Gastrocnemius medialis (tissue), 4 donors: ENCODE measurements at regions of chr9 and their contacts with region 1.

Region 1: GRCh38 chr9:91193658-91194391 is 167.9 kb downstream of the AUH start:
- DNase-seq: peak; percentile 83 to 91
- ATAC-seq: peak; percentile 54 to 55
- H3K4me3 ChIP-seq: peak overlapping the region; percentile 58 to 67 (median 62)
- H3K27ac ChIP-seq: peak overlapping the region; percentile 97 to 100 (median 99)
- H3K4me1 ChIP-seq: peaks cover 51 to 67% of the 10 kb centered on the region in 2 donors
- H3K27me3 ChIP-seq: no peaks in the 10 kb centered on the region
- CTCF ChIP-seq: no peak
- POLR2A ChIP-seq: peak; percentile 89 to 91

Region 2: GRCh38 chr9:89318123-89319014 is 1875.5 kb before region 1 on chr9 and contains the start of gene SECISBP2:
- in situ Hi-C with region 1: no loop called
- intact Hi-C with region 1: loop called (anchors 10 kb)
- DNase-seq: peak; percentile 92 to 95
- ATAC-seq: peak; percentile 90 to 93
- H3K4me3 ChIP-seq: peak within 1 kb of the TSS; percentile 69 to 83 (median 80)
- H3K27ac ChIP-seq: peak within 1 kb of the TSS; percentile 87 to 99 (median 98)
- H3K4me1 ChIP-seq: peaks cover 39 to 40% of the 10 kb centered on the region in 2 donors
- H3K27me3 ChIP-seq: no peaks in the 10 kb centered on the region
- CTCF ChIP-seq: peak; percentile 62 to 73 (median 66)
- POLR2A ChIP-seq: peak; percentile 96 to 97
- total RNA-seq, gene SECISBP2: 40.2 to 70.8 (median 54.9) TPM

Region 3: GRCh38 chr9:89602978-89603766 is 1590.7 kb before region 1 on chr9:
- in situ Hi-C with region 1: no loop called
- intact Hi-C with region 1: loop called (anchors 10 kb)
- DNase-seq: peak; percentile 82 to 89
- ATAC-seq: peak; percentile 35 to 45
- H3K4me3 ChIP-seq: peak overlapping the region; percentile 73 to 84 (median 78)
- H3K27ac ChIP-seq: peak overlapping the region; percentile 92 to 94 (median 94)
- H3K4me1 ChIP-seq: peaks cover 11 to 19% of the 10 kb centered on the region in 2 donors
- H3K27me3 ChIP-seq: no peaks in the 10 kb centered on the region
- CTCF ChIP-seq: peak; percentile 86 to 92 (median 89)
- POLR2A ChIP-seq: no peak

Region 4: GRCh38 chr9:90914868-90915483 is 278.8 kb before region 1 on chr9:
- in situ Hi-C with region 1: loop called in 2 of 4 experiments (anchors 10 kb)
- intact Hi-C with region 1: no loop called
- DNase-seq: peak; percentile 64 to 70
- ATAC-seq: peak; percentile 63 to 72
- H3K4me3 ChIP-seq: no peak overlapping the region
- H3K27ac ChIP-seq: peak overlapping the region in 1 of 4 donors; percentile 19
- H3K4me1 ChIP-seq: peaks cover 7 to 8% of the 10 kb centered on the region in 2 donors
- H3K27me3 ChIP-seq: no peaks in the 10 kb centered on the region
- CTCF ChIP-seq: peak; percentile 86 to 96 (median 93)
- POLR2A ChIP-seq: no peak

Region 5: DNA sequence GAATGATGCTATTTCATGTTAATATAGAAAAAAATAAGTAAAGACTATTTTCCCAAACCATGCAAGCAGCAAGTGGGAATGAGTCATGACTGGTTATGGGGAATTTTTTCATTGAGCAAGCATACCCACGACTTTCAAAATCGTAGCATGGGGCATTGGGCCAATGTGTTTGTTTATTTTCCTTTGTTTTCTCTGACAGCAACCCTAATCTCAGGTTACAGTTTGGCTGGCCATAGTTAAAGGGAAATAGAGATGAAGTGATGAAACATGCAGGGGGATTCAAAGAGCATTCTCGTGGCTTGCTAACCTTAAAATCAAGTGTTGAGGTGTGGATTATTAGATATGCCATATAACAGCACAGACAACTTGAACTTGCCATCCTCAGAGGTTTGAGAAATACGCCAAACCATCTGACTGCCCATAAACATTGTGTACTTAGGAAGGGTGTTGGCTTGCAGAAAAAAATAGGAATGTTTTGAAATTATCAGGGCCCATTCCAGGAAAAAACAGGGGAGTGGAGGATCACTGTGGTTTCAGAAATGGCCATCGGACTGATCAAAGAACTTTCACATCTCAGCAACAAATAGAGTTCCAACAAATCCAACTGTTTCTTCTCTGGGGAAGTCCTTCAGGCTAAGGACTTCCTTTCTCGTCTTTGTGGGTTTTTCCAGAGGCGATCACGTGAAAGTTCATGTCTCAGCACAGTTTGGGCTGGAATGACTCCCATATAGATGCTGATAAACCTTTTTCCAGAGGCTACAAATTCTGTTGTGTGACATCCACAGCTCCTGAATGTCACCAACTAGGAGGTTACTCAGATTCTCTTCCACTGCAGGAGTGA is 133.1 kb before region 1 on chr9:
- in situ Hi-C with region 1: loop called in 3 of 4 experiments (anchors 5 to 25 kb)
- intact Hi-C with region 1: loop called (anchors 1 kb)
- DNase-seq: peak; percentile 70 to 81
- ATAC-seq: peak; percentile 71 to 73
- H3K4me3 ChIP-seq: no peak overlapping the region
- H3K27ac ChIP-seq: peak overlapping the region; percentile 82 to 87 (median 84)
- H3K4me1 ChIP-seq: peaks cover 42 to 43% of the 10 kb centered on the region in 2 donors
- H3K27me3 ChIP-seq: no peaks in the 10 kb centered on the region
- CTCF ChIP-seq: no peak
- POLR2A ChIP-seq: peak in 1 of 2 donors; percentile 12

Region 6: GRCh38 chr9:91117959-91118703 is 75.7 kb before region 1 on chr9:
- in situ Hi-C with region 1: no loop called
- intact Hi-C with region 1: loop called (anchors 2 kb)
- DNase-seq: peak; percentile 84 to 90
- ATAC-seq: peak; percentile 86 to 89
- H3K4me3 ChIP-seq: peak overlapping the region; percentile 41 to 50 (median 42)
- H3K27ac ChIP-seq: peak overlapping the region; percentile 80 to 90 (median 82)
- H3K4me1 ChIP-seq: peaks cover 25 to 32% of the 10 kb centered on the region in 2 donors
- H3K27me3 ChIP-seq: no peaks in the 10 kb centered on the region
- CTCF ChIP-seq: no peak
- POLR2A ChIP-seq: peak; percentile 55 to 70

Region 7: GRCh38 chr9:91211919-91212318 is 18.1 kb after region 1 on chr9:
- in situ Hi-C with region 1: no loop called
- intact Hi-C with region 1: no loop called
- DNase-seq: no peak
- ATAC-seq: no peak
- H3K4me3 ChIP-seq: no peak overlapping the region
- H3K27ac ChIP-seq: no peak overlapping the region
- H3K4me1 ChIP-seq: peaks cover 27 to 30% of the 10 kb centered on the region in 2 donors
- H3K27me3 ChIP-seq: no peaks in the 10 kb centered on the region
- CTCF ChIP-seq: no peak
- POLR2A ChIP-seq: no peak

Region 8: GRCh38 chr9:91361291-91362050 is 167.6 kb after region 1 on chr9 and contains the start of gene AUH:
- in situ Hi-C with region 1: no loop called
- intact Hi-C with region 1: loop called (anchors 5 kb)
- DNase-seq: peak; percentile 69 to 81
- ATAC-seq: peak; percentile 93 to 94
- H3K4me3 ChIP-seq: peak within 1 kb of the TSS; percentile 76 to 97 (median 94)
- H3K27ac ChIP-seq: peak within 1 kb of the TSS; percentile 90 to 96 (median 93)
- H3K4me1 ChIP-seq: peaks cover 29 to 43% of the 10 kb centered on the region in 2 donors
- H3K27me3 ChIP-seq: no peaks in the 10 kb centered on the region
- CTCF ChIP-seq: peak in 1 of 5 experiments; percentile 29
- POLR2A ChIP-seq: peak; percentile 61 to 89
- total RNA-seq, gene AUH: 17.1 to 28.2 (median 20.8) TPM